Heart right ventricle (tissue), 16 donors: ENCODE measurements at regions of chr9 and their contacts with region 1.

Region 1: DNA sequence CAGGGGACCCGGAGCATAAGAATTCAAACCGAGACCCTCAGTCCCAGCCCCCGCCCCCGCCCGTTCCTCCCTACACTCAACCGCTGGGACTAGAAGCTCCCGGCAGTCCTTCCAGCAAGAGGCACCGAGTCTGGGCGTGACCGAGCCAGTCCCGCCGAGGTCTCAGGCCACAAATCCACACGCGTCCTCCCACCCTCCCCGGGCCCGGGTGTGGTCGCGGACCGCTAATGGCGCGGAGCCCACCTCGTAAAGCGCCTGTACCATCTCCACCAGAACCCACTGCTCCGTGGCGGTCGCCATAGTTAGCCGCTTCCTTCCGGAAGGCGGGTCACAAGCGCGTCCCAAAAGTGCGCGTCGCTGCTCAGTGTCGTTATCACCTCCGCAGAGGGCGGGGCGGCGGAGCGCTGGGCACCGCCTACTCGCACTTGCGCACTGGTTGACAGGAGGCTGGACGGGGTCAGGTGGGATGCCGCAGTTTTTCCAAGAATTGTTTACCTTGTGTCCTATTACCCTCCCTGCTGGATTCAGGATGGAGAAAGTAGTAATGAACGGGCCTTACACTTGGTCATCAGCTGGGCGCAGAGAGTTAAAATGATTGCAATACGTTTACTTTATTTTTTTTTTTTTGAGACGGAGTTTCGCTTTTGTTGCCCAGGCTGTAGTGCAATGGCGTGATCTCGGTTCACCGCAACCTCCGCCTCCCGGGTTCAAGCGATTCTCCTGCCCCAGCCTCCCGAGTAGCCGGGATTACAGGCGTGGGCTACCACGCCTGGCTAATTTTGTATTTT is at the start of gene SPTLC1:
- DNase-seq: peak; percentile 94 to 95
- ATAC-seq: peak; percentile 100
- H3K4me3 ChIP-seq: peak within 1 kb of the TSS; percentile 65 to 90 (median 78)
- H3K27ac ChIP-seq: peak within 1 kb of the TSS; percentile 79 to 94 (median 86)
- H3K4me1 ChIP-seq: peaks cover 0 to 33% (median 20%) of the 10 kb centered on the region in 9 donors
- H3K27me3 ChIP-seq: no peaks in the 10 kb centered on the region
- CTCF ChIP-seq: no peak
- total RNA-seq, gene SPTLC1: 17.5 to 28.1 (median 23.0) TPM

Region 2: GRCh38 chr9:92035687-92036410 is 79.4 kb before region 1 on chr9:
- intact Hi-C with region 1: loop called in 1 of 10 experiments (anchors 10 kb)
- DNase-seq: peak in 1 of 2 donors; percentile 19
- ATAC-seq: peak; percentile 75 to 89 (median 82)
- H3K4me3 ChIP-seq: peak overlapping the region in 1 of 10 donors; percentile 7
- H3K27ac ChIP-seq: peak overlapping the region in 8 of 10 donors; percentile 13 to 70 (median 36)
- H3K4me1 ChIP-seq: no peaks in the 10 kb centered on the region
- H3K27me3 ChIP-seq: no peaks in the 10 kb centered on the region
- CTCF ChIP-seq: no peak

Region 3: DNA sequence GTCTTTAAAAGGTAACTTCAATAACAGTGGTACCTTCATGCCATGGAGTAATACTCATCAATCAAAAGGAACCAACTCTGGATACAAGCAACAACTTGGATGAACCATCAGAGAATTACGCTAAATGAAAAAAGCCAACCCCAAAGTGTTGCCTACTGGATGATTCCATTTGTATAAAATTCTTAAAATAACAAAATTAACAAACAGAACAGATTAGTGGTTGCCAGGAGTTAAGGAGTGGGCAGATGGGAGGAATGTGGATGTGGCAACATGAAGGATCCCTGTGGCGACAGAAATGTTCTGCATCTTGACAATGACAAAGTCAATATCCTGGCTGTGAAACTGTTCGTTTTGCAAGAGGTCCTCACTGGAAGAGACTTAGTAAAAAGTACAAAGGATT is 50.6 kb before region 1 on chr9:
- intact Hi-C with region 1: no loop called
- DNase-seq: no peak
- ATAC-seq: no peak
- H3K4me3 ChIP-seq: no peak overlapping the region
- H3K27ac ChIP-seq: no peak overlapping the region
- H3K4me1 ChIP-seq: no peaks in the 10 kb centered on the region
- H3K27me3 ChIP-seq: no peaks in the 10 kb centered on the region
- CTCF ChIP-seq: no peak